MCF 10A (cell line): ENCODE measurements at regions of chr20 and their contacts with region 1.

Region 1: DNA sequence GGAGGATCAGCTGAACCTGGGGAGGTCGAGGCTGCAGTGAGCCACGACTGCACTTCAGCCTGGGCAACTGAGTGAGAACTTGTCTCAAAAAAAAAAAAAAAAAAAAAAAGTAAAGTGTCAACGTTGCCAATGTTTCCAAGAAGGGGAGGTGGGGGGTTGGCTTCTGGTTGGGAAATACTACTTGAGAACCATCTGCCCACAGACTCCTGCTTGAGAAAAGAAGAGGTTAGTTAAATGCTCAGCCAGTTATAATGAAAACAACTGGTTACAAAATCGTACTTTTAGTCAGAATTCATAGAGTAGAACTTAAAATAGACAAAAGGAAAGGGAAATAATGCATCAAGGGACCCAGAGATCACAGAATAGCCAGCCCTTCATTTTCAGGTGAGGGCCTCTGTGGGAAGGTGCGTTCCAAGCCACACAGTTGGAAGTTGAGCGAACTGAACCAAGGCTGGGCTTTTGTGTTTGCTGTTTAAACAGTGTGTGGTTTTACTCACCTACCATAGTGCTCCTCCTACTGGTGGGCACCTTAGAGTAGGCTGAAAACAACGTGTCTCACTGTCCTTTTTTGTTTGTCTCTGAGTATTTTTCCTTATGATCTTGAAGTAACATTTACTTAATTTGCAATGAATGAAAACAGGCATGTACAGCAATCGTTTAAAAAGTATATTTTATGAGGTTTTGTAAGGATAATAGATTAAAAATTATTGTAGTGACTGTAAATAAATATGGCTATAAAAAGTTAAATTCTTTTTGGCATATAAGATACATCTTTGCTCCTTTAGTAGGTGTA is 200.7 kb downstream of the BCAS1 start:
- DNase-seq: peak; percentile 90
- H3K4me3 Mint-ChIP-seq: peak overlapping the region; percentile 36
- H3K27ac Mint-ChIP-seq: peak overlapping the region; percentile 96
- H3K4me1 Mint-ChIP-seq: peaks cover 49% of the 10 kb centered on the region
- H3K27me3 Mint-ChIP-seq: no peaks in the 10 kb centered on the region
- CTCF ChIP-seq: peak; percentile 65

Region 2: DNA sequence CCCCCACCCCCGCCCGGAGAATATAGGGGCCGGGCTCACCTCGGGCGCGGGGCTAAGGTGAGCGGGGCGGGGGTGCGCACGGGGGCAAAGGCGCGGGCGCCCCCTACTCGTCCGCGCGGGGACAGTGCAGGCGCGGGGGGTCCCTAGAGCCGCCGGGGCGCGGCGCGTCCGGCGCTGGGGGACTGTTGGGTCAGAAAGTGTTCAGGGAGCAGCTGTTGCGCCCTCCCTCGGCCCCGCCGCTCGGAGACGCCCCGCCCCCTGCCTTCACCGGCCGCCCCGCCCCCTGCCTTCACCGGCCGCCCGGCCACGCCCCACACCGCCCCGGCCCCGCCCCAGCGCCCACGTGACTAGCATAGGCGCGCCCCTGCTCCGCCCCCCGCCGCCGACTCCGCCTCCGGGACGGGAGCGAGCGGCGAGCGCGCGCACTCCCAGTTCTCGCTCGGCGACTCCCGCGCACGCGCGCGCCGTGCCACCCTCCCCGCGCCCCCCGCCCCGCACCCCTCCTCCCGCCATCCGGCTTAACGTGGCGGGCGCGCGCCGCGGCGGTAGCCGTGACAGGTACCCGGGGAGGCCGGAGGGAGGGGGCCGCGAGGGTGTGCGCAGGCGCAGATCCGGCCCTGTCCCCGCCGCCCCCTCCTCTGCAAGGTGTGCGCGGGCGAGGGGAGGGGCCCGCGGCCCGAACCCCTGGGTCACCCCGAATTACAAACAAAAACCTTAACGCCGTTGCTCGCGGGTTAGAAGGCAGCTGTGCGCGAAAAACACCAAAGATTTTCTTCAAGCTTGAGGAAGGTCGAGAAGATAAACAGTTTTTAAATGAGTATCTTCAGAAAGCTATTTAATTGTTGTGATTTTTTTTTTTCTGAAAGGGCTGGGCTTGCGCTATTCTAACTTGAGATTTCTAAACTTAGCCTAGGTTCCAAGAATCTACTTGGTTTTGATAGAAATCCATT is 275.3 kb before region 1 on chr20:
- CTCF ChIA-PET with region 1: interaction called, 7 read pairs
- POLR2A ChIA-PET with region 1: interaction called, 36 read pairs
- intact Hi-C with region 1: loop called (anchors 5 kb)
- DNase-seq: peak; percentile 90
- H3K4me3 Mint-ChIP-seq: peak overlapping the region; percentile 82
- H3K27ac Mint-ChIP-seq: peak overlapping the region; percentile 93
- H3K4me1 Mint-ChIP-seq: peaks cover 29% of the 10 kb centered on the region
- H3K27me3 Mint-ChIP-seq: no peaks in the 10 kb centered on the region
- CTCF ChIP-seq: peak; percentile 23

Region 3: GRCh38 chr20:53692413-53693067 is 177.1 kb before region 1 on chr20:
- CTCF ChIA-PET with region 1: no interaction called
- POLR2A ChIA-PET with region 1: no interaction called
- intact Hi-C with region 1: no loop called
- DNase-seq: no peak
- H3K4me3 Mint-ChIP-seq: no peak overlapping the region
- H3K27ac Mint-ChIP-seq: no peak overlapping the region
- H3K4me1 Mint-ChIP-seq: peaks cover 8% of the 10 kb centered on the region
- H3K27me3 Mint-ChIP-seq: no peaks in the 10 kb centered on the region
- CTCF ChIP-seq: no peak

Region 4: GRCh38 chr20:53750827-53751619 is 118.6 kb before region 1 on chr20:
- CTCF ChIA-PET with region 1: interaction called, 5 read pairs
- POLR2A ChIA-PET with region 1: interaction called, 10 read pairs
- intact Hi-C with region 1: loop called (anchors 1 kb)
- DNase-seq: no peak
- H3K4me3 Mint-ChIP-seq: no peak overlapping the region
- H3K27ac Mint-ChIP-seq: peak overlapping the region; percentile 83
- H3K4me1 Mint-ChIP-seq: peaks cover 29% of the 10 kb centered on the region
- H3K27me3 Mint-ChIP-seq: no peaks in the 10 kb centered on the region
- CTCF ChIP-seq: no peak

Region 5: DNA sequence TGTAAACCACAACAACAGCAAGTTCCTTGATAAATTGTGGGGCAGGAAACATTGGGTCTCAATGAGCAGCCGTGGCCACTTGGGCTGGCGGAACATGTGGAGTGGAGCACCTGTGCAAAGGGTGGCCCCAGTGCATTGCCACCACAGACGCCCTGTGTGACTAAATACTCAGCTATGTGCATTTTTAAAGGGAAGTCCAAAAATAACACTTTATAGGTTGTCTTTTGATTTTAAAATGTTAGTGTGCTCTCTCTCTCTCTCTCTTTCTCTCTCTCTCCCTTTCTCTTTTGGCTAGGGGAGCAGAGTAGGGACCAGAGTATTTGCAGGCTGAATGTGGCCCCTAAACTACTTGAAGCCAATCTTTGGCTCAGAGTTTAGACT is 35.6 kb before region 1 on chr20:
- CTCF ChIA-PET with region 1: interaction called, 8 read pairs
- POLR2A ChIA-PET with region 1: interaction called, 88 read pairs
- intact Hi-C with region 1: no loop called
- DNase-seq: no peak
- H3K4me3 Mint-ChIP-seq: no peak overlapping the region
- H3K27ac Mint-ChIP-seq: peak overlapping the region; percentile 31
- H3K4me1 Mint-ChIP-seq: peaks cover 16% of the 10 kb centered on the region
- H3K27me3 Mint-ChIP-seq: no peaks in the 10 kb centered on the region
- CTCF ChIP-seq: no peak

Region 6: DNA sequence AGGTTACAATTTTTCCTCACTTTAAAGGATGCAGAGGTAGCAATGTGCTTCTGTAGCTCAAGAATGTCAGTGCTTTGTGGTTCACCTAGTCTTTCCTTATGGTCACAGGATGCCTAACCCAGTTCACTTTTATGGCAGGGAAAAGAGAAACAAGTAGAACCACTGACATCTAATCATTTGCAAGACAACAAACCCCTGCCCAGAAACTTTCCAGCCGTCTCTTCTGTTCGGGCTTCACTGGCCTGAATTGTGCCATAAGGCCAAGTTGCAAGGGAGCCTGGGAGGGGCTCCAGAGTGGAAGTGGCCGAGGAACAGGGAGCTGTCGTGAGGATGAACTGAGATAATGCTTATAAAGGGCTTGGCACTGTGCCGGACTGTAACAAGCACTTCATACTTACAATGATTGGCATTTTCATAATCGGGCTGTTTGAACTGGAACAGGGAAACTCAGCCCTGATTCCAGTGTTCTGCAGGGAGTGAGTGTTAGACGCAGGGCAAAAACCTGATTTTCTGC is 11.9 kb before region 1 on chr20:
- CTCF ChIA-PET with region 1: interaction called, 11 read pairs
- POLR2A ChIA-PET with region 1: interaction called, 14 read pairs
- intact Hi-C with region 1: no loop called
- DNase-seq: no peak
- H3K4me3 Mint-ChIP-seq: no peak overlapping the region
- H3K27ac Mint-ChIP-seq: no peak overlapping the region
- H3K4me1 Mint-ChIP-seq: no peaks in the 10 kb centered on the region
- H3K27me3 Mint-ChIP-seq: no peaks in the 10 kb centered on the region
- CTCF ChIP-seq: no peak

Region 7: GRCh38 chr20:53905019-53905847 is 35.6 kb after region 1 on chr20:
- CTCF ChIA-PET with region 1: interaction called, 11 read pairs
- POLR2A ChIA-PET with region 1: interaction called, 31 read pairs
- intact Hi-C with region 1: no loop called
- DNase-seq: no peak
- H3K4me3 Mint-ChIP-seq: no peak overlapping the region
- H3K27ac Mint-ChIP-seq: peak overlapping the region; percentile 93
- H3K4me1 Mint-ChIP-seq: peaks cover 52% of the 10 kb centered on the region
- H3K27me3 Mint-ChIP-seq: no peaks in the 10 kb centered on the region
- CTCF ChIP-seq: no peak